PC-9 (cell line): ENCODE measurements at regions of chr11 and their contacts with region 1.

Region 1: GRCh38 chr11:126834149-126834548 is 166.4 kb downstream of the KIRREL3 start:
- DNase-seq: peak in 1 of 2 experiments; percentile 18
- H3K4me3 ChIP-seq: no peak overlapping the region
- H3K27ac ChIP-seq: no peak overlapping the region
- H3K4me1 ChIP-seq: no peaks in the 10 kb centered on the region
- H3K27me3 ChIP-seq: peaks cover 24% of the 10 kb centered on the region
- CTCF ChIP-seq: no peak

Region 2: DNA sequence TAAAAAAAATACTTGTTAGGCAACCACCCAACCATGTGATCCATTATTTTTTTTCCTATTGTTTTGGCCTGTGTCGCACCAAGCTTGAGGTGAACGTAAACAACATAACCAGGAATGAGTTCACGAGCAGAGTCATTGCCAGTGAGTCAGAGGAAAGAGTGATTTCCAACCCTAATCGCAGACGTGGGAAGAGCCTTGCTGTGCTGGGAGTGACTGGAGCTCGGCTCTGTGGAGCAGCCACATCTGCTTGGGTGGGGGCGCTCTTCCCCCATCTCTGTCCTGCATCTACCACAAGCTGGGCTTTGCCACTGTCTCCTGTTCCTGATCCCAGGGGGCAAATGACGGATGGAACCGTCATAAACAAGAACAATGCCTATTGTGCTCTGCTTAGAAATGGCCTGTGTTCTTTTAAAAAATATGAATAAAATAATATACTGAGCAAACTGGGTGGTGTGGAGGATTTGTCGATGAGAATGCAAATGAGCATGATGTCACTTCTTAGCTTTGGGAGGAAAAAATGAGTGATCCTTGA is 43.5 kb before region 1 on chr11:
- CTCF ChIA-PET with region 1: interaction called, 14 read pairs
- POLR2A ChIA-PET with region 1: no interaction called
- intact Hi-C with region 1: no loop called
- DNase-seq: peak in 1 of 2 experiments; percentile 7
- H3K4me3 ChIP-seq: no peak overlapping the region
- H3K27ac ChIP-seq: no peak overlapping the region
- H3K4me1 ChIP-seq: no peaks in the 10 kb centered on the region
- H3K27me3 ChIP-seq: peaks cover 9% of the 10 kb centered on the region; the same call in 1 of the 2 replicates
- CTCF ChIP-seq: no peak

Region 3: GRCh38 chr11:126917531-126918204 is 83.5 kb after region 1 on chr11:
- CTCF ChIA-PET with region 1: no interaction called
- POLR2A ChIA-PET with region 1: no interaction called
- intact Hi-C with region 1: loop called (anchors 1 kb)
- DNase-seq: peak; percentile 53 to 58
- H3K4me3 ChIP-seq: no peak overlapping the region
- H3K27ac ChIP-seq: no peak overlapping the region
- H3K4me1 ChIP-seq: no peaks in the 10 kb centered on the region
- H3K27me3 ChIP-seq: no peaks in the 10 kb centered on the region
- CTCF ChIP-seq: no peak

Region 4: GRCh38 chr11:127074151-127074761 is 240.1 kb after region 1 on chr11:
- CTCF ChIA-PET with region 1: no interaction called
- POLR2A ChIA-PET with region 1: no interaction called
- intact Hi-C with region 1: no loop called
- DNase-seq: peak; percentile 37 to 59
- H3K4me3 ChIP-seq: no peak overlapping the region
- H3K27ac ChIP-seq: no peak overlapping the region
- H3K4me1 ChIP-seq: no peaks in the 10 kb centered on the region
- H3K27me3 ChIP-seq: peaks cover 33% of the 10 kb centered on the region
- CTCF ChIP-seq: no peak; the same call in 1 of the 2 replicates